Activated CD4-positive, alpha-beta memory T cell treated with anti-CD3 and anti-CD28 coated beads for 36 hours (primary cell): ENCODE measurements at regions of chr10 and their contacts with region 1.

Region 1: GRCh38 chr10:101840741-101841453 is 2.7 kb downstream of the KCNIP2 start:
- DNase-seq: peak; percentile 88
- H3K4me3 Mint-ChIP-seq: peak overlapping the region; percentile 74
- H3K27ac Mint-ChIP-seq: no peak overlapping the region
- H3K4me1 Mint-ChIP-seq: peaks cover 48% of the 10 kb centered on the region
- H3K27me3 Mint-ChIP-seq: peaks cover 2% of the 10 kb centered on the region

Region 2: GRCh38 chr10:101602761-101603398 is 238.0 kb before region 1 on chr10:
- CTCF ChIA-PET with region 1: interaction called, 10 read pairs
- POLR2A ChIA-PET with region 1: no interaction called
- intact Hi-C with region 1: no loop called
- DNase-seq: peak; percentile 86
- H3K4me3 Mint-ChIP-seq: no peak overlapping the region
- H3K27ac Mint-ChIP-seq: no peak overlapping the region
- H3K4me1 Mint-ChIP-seq: no peaks in the 10 kb centered on the region
- H3K27me3 Mint-ChIP-seq: no peaks in the 10 kb centered on the region

Region 3: DNA sequence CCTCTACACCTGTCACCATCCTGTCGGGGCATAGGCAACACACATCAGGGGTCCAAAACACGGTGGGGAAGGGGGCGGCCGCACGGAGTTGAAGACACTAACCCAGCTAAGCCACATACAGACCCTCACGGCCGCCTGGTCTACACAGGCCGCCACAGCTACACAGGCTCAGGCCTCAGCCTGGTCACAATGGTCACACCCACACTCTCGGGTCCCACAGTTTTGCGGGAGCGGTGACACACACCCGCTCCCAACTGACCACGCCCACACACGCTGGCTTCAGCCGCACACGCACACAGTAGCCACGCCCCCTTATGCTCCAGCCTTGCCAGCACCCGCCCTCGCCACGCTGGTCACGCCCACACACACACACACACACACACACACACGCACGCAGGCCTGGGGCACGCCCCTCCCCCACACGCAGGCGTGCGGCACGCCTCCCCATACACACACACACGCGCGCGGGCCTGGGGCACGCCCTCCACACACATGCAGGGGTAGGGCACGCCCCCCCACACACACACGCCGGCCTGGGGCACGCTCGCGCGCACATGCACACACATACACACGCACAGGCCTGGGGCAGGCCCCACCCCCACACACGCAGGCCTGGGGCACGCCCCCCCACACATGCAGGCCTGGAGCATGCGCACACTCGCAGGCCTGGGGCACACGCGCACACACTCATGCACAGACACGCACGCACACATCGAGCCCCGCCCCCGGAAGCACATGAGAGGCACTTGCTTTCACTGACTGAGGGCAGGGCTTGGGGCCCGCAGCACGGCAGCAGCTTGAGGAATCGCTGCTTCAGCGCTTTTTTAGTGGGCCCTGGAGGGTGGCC is 10.4 kb before region 1 on chr10:
- CTCF ChIA-PET with region 1: interaction called, 22 read pairs
- POLR2A ChIA-PET with region 1: interaction called, 6 read pairs
- intact Hi-C with region 1: no loop called
- DNase-seq: peak; percentile 93
- H3K4me3 Mint-ChIP-seq: peak overlapping the region; percentile 75
- H3K27ac Mint-ChIP-seq: peak overlapping the region; percentile 86
- H3K4me1 Mint-ChIP-seq: peaks cover 52% of the 10 kb centered on the region
- H3K27me3 Mint-ChIP-seq: no peaks in the 10 kb centered on the region

Region 4: DNA sequence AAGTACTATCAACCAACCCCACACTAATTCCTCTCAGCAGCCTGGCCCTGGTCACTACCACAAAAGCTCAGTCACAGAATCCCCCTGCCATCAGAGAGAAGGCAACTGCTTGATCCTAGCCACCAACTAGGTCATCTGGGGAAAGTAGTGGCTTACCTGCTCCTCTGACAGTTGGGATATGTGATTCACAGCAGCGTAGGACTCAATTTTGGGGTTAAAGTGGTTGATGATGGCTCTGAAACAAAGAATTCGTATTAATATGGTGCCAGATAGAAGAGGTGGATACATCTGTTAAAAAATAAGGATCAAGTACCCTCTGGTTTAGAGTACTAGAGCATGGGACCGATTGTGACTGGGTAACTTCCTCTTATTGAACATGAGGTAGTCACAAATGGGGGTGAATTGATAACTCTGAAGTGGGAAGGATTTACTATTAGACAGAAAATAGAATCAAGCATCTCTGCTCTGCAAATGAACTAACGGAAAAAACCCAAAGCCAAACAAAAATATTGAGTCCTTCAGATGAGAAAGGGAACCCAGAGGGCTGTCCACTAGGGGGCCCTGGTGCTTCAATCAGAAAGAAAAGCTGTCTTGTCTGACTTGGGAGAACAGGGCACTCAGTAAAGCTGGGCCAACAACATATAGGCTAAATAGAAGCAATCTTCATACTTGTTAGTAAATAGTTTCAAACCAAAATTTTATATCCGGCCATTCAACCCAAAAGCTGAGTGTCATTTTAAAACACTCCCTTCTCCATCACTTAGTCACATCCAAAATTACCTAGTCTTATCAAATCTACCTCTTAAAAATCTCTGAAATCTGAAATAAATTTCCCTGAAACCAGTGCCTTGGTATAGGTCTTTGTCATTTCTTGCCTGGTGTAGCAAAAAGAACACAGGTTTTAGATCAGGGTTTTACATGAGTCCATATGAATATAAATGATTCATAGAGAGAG is 48.6 kb after region 1 on chr10:
- CTCF ChIA-PET with region 1: interaction called, 22 read pairs
- POLR2A ChIA-PET with region 1: no interaction called
- intact Hi-C with region 1: no loop called
- DNase-seq: peak; percentile 83
- H3K4me3 Mint-ChIP-seq: no peak overlapping the region
- H3K27ac Mint-ChIP-seq: no peak overlapping the region
- H3K4me1 Mint-ChIP-seq: no peaks in the 10 kb centered on the region
- H3K27me3 Mint-ChIP-seq: no peaks in the 10 kb centered on the region

Region 5: GRCh38 chr10:101995451-101996063 is 154.7 kb after region 1 on chr10:
- CTCF ChIA-PET with region 1: interaction called, 13 read pairs
- POLR2A ChIA-PET with region 1: no interaction called
- intact Hi-C with region 1: no loop called
- DNase-seq: no peak
- H3K4me3 Mint-ChIP-seq: no peak overlapping the region
- H3K27ac Mint-ChIP-seq: no peak overlapping the region
- H3K4me1 Mint-ChIP-seq: peaks cover 9% of the 10 kb centered on the region
- H3K27me3 Mint-ChIP-seq: no peaks in the 10 kb centered on the region

Region 6: DNA sequence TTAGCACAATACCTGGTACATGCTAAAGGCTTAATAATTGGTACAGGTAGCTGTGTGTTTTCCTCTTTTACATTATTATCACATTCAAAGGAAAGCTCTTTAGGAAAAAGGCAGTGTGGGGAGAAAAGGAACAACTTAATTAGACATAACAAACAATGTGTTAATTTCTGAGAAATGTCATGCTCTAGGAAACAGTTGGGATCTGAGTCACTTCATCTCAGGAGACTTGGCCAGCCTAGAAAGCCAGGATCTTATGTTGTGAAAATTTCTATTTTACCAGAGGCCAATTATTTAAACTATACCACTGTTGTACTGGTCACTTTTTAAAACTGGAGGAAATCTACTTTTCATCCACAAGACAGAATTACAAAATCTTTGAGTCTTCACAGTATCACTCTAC is 175.5 kb after region 1 on chr10:
- CTCF ChIA-PET with region 1: interaction called, 248 read pairs
- POLR2A ChIA-PET with region 1: no interaction called
- intact Hi-C with region 1: no loop called
- DNase-seq: no peak
- H3K4me3 Mint-ChIP-seq: no peak overlapping the region
- H3K27ac Mint-ChIP-seq: no peak overlapping the region
- H3K4me1 Mint-ChIP-seq: no peaks in the 10 kb centered on the region
- H3K27me3 Mint-ChIP-seq: no peaks in the 10 kb centered on the region

Region 7: GRCh38 chr10:102064868-102065560 is 224.1 kb after region 1 on chr10 and contains the start of gene HPS6:
- CTCF ChIA-PET with region 1: interaction called, 30 read pairs
- POLR2A ChIA-PET with region 1: no interaction called
- intact Hi-C with region 1: loop called (anchors 2 kb)
- DNase-seq: peak; percentile 93
- H3K4me3 Mint-ChIP-seq: peak within 1 kb of the TSS; percentile 86
- H3K27ac Mint-ChIP-seq: peak within 1 kb of the TSS; percentile 81
- H3K4me1 Mint-ChIP-seq: peaks cover 26% of the 10 kb centered on the region
- H3K27me3 Mint-ChIP-seq: no peaks in the 10 kb centered on the region
- total RNA-seq, gene HPS6: 22.3 TPM